Activated CD8-positive, alpha-beta T cell treated with anti-CD3 and anti-CD28 coated beads for 36 hours (primary cell): ENCODE measurements at regions of chr1 and their contacts with region 1.

Region 1: GRCh38 chr1:1122078-1122811 is 6.4 kb upstream of the C1orf159 start:
- DNase-seq: peak; percentile 87
- ATAC-seq: peak; percentile 94
- H3K4me3 Mint-ChIP-seq: no peak overlapping the region
- H3K27ac Mint-ChIP-seq: no peak overlapping the region
- H3K4me1 Mint-ChIP-seq: peaks cover 14% of the 10 kb centered on the region
- H3K27me3 Mint-ChIP-seq: peaks cover 7% of the 10 kb centered on the region
- CTCF ChIP-seq: peak; percentile 91

Region 2: GRCh38 chr1:1137256-1138045 is 15.2 kb after region 1 on chr1:
- CTCF ChIA-PET with region 1: interaction called, 20 read pairs
- POLR2A ChIA-PET with region 1: interaction called, 5 read pairs
- intact Hi-C with region 1: no loop called
- DNase-seq: peak; percentile 89
- ATAC-seq: peak; percentile 84
- H3K4me3 Mint-ChIP-seq: peak overlapping the region; percentile 59
- H3K27ac Mint-ChIP-seq: peak overlapping the region; percentile 88
- H3K4me1 Mint-ChIP-seq: peaks cover 16% of the 10 kb centered on the region
- H3K27me3 Mint-ChIP-seq: no peaks in the 10 kb centered on the region
- CTCF ChIP-seq: no peak

Region 3: DNA sequence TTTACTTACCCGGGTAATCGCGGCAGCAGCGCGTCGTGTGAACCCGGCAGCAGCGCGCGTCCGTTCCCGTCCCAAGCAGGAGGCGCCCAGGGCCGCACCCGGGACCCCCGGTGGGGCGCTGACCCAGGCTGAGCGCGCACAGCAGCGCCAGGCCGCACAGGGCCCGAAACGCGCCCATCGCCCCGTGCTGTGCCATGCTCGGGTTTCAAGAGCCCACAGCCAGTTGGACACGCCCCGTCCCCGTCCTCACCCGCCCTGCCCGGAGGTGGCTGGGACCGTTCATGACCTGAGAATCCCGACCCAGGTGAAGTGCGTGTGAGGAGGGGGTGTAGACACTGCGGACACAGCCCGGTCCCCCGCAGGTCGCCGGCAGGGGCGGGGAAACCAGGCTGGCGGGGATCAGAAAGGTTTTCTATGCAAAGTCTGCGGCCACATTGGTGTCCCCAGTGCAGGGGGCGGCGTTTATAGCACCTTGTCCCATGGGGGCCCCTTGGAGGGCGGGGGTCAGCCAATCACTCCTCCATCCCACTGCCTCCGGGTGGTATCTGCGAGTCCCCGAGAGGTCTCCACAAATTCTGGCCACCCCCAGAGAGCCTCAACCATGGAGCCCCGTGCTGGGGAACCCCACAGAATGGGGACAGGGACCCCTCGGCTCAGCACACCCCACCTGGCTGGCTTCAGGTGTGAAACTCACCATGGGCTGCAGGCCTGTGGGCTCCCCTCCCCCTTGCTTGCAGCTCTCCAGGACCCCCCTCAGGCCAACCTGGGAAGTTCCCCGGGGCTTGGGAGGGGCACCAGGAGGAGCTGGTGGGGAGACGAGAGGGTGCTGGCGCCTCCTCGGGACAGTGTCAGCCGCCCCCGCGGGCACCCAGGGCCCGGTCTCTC is 84.4 kb after region 1 on chr1 and contains the start of gene TNFRSF18:
- CTCF ChIA-PET with region 1: interaction called, 20 read pairs
- POLR2A ChIA-PET with region 1: interaction called, 3 read pairs
- intact Hi-C with region 1: no loop called
- DNase-seq: peak; percentile 70
- ATAC-seq: peak; percentile 11
- H3K4me3 Mint-ChIP-seq: peak within 1 kb of the TSS; percentile 79
- H3K27ac Mint-ChIP-seq: peak within 1 kb of the TSS; percentile 98
- H3K4me1 Mint-ChIP-seq: peaks cover 31% of the 10 kb centered on the region
- H3K27me3 Mint-ChIP-seq: no peaks in the 10 kb centered on the region
- CTCF ChIP-seq: no peak
- total RNA-seq, gene TNFRSF18: 126 to 135 TPM

Region 4: GRCh38 chr1:1231400-1232223 is 109.4 kb after region 1 on chr1 and contains the start of gene SDF4:
- CTCF ChIA-PET with region 1: interaction called, 14 read pairs
- POLR2A ChIA-PET with region 1: interaction called, 5 read pairs
- intact Hi-C with region 1: no loop called
- DNase-seq: peak; percentile 97
- ATAC-seq: peak; percentile 98
- H3K4me3 Mint-ChIP-seq: peak within 1 kb of the TSS; percentile 95
- H3K27ac Mint-ChIP-seq: peak within 1 kb of the TSS; percentile 93
- H3K4me1 Mint-ChIP-seq: peaks cover 32% of the 10 kb centered on the region
- H3K27me3 Mint-ChIP-seq: no peaks in the 10 kb centered on the region
- CTCF ChIP-seq: no peak
- total RNA-seq, gene SDF4: 81.5 to 87.5 TPM

Region 5: DNA sequence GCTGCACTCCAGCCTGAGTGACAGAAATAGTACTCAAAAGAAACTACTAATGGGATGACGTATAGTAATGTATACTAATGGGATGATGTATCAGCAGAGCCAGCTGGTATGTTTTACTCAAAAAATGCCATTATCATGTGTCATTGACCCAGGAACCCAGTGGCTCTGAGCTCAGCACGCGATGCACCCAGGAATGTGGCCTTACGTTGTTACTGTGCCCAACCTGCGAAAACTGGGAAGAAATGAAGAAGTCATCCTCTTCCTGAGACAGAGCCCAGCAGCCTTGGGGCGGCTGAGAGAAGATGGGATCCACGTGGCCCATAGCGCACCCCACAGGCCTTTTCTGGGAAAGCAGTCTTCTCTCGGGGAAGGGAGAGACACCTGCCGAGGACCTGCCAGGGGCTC is 142.6 kb after region 1 on chr1:
- CTCF ChIA-PET with region 1: interaction called, 14 read pairs
- POLR2A ChIA-PET with region 1: interaction called, 3 read pairs
- intact Hi-C with region 1: no loop called
- DNase-seq: peak; percentile 51
- ATAC-seq: peak; percentile 51
- H3K4me3 Mint-ChIP-seq: no peak overlapping the region
- H3K27ac Mint-ChIP-seq: no peak overlapping the region
- H3K4me1 Mint-ChIP-seq: peaks cover 16% of the 10 kb centered on the region
- H3K27me3 Mint-ChIP-seq: no peaks in the 10 kb centered on the region
- CTCF ChIP-seq: no peak